Psoas muscle (tissue), 8 donors: ENCODE measurements at regions of chr6 and their contacts with region 1.

Region 1: GRCh38 chr6:156953479-156954146 is 176.4 kb downstream of the ARID1B start:
- DNase-seq: no peak
- ATAC-seq: peak; percentile 77 to 83 (median 80)
- H3K4me3 ChIP-seq: peak overlapping the region; percentile 50
- H3K27ac ChIP-seq: peak overlapping the region; percentile 89
- H3K4me1 ChIP-seq: peaks cover 97% of the 10 kb centered on the region
- H3K27me3 ChIP-seq: no peaks in the 10 kb centered on the region
- CTCF ChIP-seq: no peak

Region 2: GRCh38 chr6:156791320-156791850 is 162.2 kb before region 1 on chr6:
- intact Hi-C with region 1: loop called (anchors 5 to 10 kb)
- DNase-seq: no peak
- ATAC-seq: peak in 2 of 4 donors; percentile 40 to 42
- H3K4me3 ChIP-seq: peak overlapping the region; percentile 43
- H3K27ac ChIP-seq: peak overlapping the region; percentile 25
- H3K4me1 ChIP-seq: peaks cover 89% of the 10 kb centered on the region
- H3K27me3 ChIP-seq: no peaks in the 10 kb centered on the region
- CTCF ChIP-seq: no peak

Region 3: DNA sequence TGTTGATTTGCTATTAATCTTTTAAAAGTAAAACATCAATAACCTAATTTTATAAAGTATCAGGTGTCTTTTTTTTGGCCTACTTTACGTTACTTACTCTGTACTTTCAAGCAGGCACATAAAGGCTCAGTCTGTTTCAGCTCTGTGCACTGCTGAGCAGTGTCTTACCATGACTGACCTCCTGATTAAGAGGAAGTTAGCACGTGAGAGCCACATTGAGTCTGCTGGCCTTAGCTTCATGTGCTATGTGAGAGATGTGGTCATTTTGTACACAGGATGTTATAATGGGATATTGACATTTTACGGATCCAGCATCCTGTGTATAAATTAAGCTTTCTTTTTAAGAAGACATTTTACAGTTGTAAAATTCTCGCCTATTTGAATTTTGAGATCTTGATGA is 144.6 kb before region 1 on chr6:
- intact Hi-C with region 1: loop called in 1 of 2 experiments (anchors 10 kb)
- DNase-seq: no peak
- ATAC-seq: peak; percentile 68 to 87 (median 84)
- H3K4me3 ChIP-seq: no peak overlapping the region
- H3K27ac ChIP-seq: peak overlapping the region; percentile 51
- H3K4me1 ChIP-seq: peaks cover 44% of the 10 kb centered on the region
- H3K27me3 ChIP-seq: no peaks in the 10 kb centered on the region
- CTCF ChIP-seq: no peak

Region 4: DNA sequence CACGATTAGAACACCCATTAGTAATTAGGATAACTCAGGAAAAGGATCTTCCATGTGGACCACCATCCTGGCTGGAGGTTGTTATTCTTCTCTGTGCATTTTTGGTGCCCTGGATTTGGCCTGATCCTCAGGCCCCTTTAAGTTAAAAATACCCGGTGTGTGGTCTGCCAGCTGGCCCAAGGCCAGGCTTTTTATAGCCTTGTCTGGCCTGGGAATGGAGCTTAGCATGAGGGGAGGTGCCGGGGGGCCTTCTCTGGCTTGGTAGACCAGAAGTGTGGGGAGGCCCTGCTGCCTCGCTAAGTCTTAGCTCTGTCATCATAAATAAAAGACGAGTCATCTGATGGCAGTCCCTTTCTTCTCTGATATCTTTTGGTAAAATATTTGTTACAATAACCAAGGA is 105.1 kb before region 1 on chr6:
- intact Hi-C with region 1: no loop called
- DNase-seq: peak; percentile 48 to 86
- ATAC-seq: peak; percentile 24 to 75 (median 68)
- H3K4me3 ChIP-seq: peak overlapping the region; percentile 43
- H3K27ac ChIP-seq: peak overlapping the region; percentile 82
- H3K4me1 ChIP-seq: peaks cover 96% of the 10 kb centered on the region
- H3K27me3 ChIP-seq: no peaks in the 10 kb centered on the region
- CTCF ChIP-seq: no peak

Region 5: DNA sequence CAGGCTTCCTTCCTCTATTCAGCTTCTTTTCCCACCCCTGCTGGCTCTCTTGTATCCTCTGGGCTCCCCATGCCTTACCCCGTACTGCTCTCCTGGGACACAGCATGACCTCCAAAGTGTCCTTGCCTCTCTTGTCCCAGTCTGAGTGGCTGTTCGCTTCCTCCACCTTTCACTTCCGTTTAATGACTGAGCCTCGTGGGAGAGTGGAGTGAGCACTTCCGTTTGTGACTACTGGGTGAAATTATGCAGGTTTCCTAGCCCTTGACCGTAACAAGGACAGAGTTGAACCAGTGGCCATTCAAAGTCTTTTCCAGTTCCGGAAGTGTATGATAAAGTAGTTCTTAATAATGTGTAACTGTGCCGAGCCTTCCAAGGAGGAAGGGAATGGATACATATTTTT is 67.2 kb before region 1 on chr6:
- intact Hi-C with region 1: loop called in 1 of 2 experiments (anchors 10 kb)
- DNase-seq: no peak
- ATAC-seq: peak in 2 of 4 donors; percentile 39 to 49
- H3K4me3 ChIP-seq: no peak overlapping the region
- H3K27ac ChIP-seq: no peak overlapping the region
- H3K4me1 ChIP-seq: peaks cover 63% of the 10 kb centered on the region
- H3K27me3 ChIP-seq: no peaks in the 10 kb centered on the region
- CTCF ChIP-seq: no peak

Region 6: DNA sequence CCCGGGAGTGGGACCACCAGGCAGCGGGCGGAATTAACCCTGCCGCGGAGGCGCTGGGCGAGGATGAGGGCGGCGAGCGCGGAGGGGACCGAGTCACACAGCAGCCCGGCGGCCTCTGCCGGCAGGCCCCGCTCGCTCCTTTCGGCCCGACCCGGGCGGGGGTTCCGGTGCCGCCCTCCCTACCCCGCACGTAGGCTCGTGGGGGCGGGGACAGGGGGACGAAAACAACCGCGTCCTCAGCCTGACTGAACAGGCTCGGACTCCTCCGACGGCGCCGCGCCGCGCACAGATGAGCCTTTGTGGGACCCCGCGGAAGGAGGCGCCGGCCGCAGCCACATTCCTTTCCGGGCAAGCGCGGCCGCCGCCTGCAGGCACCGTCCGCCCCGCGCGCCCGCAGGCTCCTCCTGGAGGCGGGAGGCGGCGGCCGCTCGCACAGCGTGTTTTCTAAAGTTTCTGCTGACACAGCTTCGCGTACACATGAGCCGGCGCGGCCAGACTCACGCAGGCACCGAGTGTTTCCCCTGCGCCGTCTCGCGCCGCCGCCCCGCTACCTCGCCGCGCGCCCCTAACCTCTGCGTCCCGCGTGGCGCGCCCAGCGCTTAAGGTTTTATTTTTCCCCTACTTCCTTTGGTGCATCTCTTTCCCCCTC is 67.9 kb after region 1 on chr6:
- intact Hi-C with region 1: no loop called
- DNase-seq: peak; percentile 94 to 95
- ATAC-seq: peak; percentile 84 to 90 (median 88)
- H3K4me3 ChIP-seq: peak overlapping the region; percentile 84
- H3K27ac ChIP-seq: peak overlapping the region; percentile 100
- H3K4me1 ChIP-seq: peaks cover 48% of the 10 kb centered on the region
- H3K27me3 ChIP-seq: no peaks in the 10 kb centered on the region
- CTCF ChIP-seq: peak; percentile 53